ENCODE measurements at regions of chr2 and their contacts with region 1.

Region 1: DNA sequence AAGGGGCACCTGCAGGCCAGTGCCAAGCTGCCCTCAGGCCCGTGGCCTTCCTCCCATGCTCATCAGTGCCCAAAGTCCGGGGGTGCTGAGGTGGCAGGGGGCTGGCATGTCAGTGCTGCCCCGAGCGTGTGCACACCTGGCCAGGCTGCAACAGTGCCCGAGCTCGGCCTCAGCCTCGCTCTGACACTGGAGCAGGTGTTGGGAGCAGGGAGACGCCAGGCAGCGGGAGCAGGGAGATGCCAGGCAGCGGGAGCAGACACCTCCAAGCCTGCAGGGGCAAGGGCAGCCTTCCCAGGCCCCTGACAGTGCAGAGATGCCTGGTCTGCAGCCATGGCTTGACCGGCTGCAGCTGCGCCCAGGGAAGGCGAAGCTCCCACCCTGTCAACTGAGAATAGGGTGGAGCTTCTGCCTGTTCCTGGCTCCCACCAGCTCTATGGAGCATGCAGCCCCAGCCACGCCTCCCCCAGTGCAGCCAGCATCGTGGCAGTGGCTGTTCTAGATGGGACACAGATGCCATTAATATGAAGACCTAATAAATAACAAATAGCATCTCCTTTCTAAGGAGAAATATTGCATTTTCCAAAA is 82.4 kb downstream of the DTNB start:
- DNase-seq: no peak
- H3K4me3 Mint-ChIP-seq: no peak overlapping the region
- H3K27ac Mint-ChIP-seq: no peak overlapping the region
- H3K4me1 Mint-ChIP-seq: peaks cover 38% of the 10 kb centered on the region
- H3K27me3 Mint-ChIP-seq: no peaks in the 10 kb centered on the region

Region 2: GRCh38 chr2:25481398-25482300 is 109.4 kb before region 1 on chr2:
- CTCF ChIA-PET with region 1: no interaction called
- POLR2A ChIA-PET with region 1: no interaction called
- DNase-seq: no peak
- H3K4me3 Mint-ChIP-seq: no peak overlapping the region
- H3K27ac Mint-ChIP-seq: no peak overlapping the region
- H3K4me1 Mint-ChIP-seq: peaks cover 5% of the 10 kb centered on the region
- H3K27me3 Mint-ChIP-seq: no peaks in the 10 kb centered on the region

Region 3: GRCh38 chr2:25551316-25551715 is 39.7 kb before region 1 on chr2:
- CTCF ChIA-PET with region 1: no interaction called
- POLR2A ChIA-PET with region 1: no interaction called
- DNase-seq: no peak
- H3K4me3 Mint-ChIP-seq: no peak overlapping the region
- H3K27ac Mint-ChIP-seq: no peak overlapping the region
- H3K4me1 Mint-ChIP-seq: peaks cover 12% of the 10 kb centered on the region
- H3K27me3 Mint-ChIP-seq: no peaks in the 10 kb centered on the region

Region 4: GRCh38 chr2:25606892-25607291 is 15.9 kb after region 1 on chr2:
- CTCF ChIA-PET with region 1: interaction called, 11 read pairs
- POLR2A ChIA-PET with region 1: no interaction called
- DNase-seq: no peak
- H3K4me3 Mint-ChIP-seq: no peak overlapping the region
- H3K27ac Mint-ChIP-seq: no peak overlapping the region
- H3K4me1 Mint-ChIP-seq: peaks cover 9% of the 10 kb centered on the region
- H3K27me3 Mint-ChIP-seq: no peaks in the 10 kb centered on the region

Measured in activated CD4-positive, alpha-beta T cell treated with anti-CD3 and anti-CD28 coated beads, Interleukin-2, amount 10 ng/mL, durations not matched to agents 7 days and 5 days (primary cell).